GM10248 (cell line): ENCODE measurements at regions of chr7 and their contacts with region 1.

Region 1: DNA sequence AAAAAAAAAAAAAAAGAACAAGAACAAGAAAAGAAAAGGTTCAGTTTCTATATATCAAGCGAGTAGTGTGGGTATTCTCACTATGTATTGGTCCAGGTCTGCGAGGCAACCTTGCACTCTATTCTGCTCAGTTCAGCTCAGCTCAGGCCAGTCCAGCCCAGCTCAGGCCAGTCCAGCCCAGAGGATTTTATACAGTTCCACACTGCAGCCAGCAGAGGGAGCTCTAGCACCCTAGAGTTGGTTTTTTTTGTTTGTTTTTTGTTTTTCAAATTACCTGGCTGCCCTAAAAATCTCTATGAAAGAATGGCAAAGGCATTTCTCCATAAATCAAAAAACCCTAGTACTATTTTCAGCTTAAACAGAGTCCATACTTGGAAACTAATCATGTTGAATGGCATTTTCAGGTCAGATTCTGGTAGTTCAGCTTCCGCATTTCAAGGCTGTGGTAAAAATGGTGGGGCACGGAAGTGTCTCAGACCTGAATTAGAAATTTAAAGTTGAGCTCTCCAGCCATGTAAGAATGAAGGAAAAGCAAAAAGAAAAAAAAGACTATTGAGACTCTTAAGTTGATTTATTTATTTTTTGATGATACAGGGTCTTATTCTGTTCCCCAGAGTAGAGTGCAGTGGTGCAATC is 55.2 kb upstream of the GSDME start:
- DNase-seq: peak; percentile 58
- CTCF ChIP-seq: peak; percentile 81

Region 2: DNA sequence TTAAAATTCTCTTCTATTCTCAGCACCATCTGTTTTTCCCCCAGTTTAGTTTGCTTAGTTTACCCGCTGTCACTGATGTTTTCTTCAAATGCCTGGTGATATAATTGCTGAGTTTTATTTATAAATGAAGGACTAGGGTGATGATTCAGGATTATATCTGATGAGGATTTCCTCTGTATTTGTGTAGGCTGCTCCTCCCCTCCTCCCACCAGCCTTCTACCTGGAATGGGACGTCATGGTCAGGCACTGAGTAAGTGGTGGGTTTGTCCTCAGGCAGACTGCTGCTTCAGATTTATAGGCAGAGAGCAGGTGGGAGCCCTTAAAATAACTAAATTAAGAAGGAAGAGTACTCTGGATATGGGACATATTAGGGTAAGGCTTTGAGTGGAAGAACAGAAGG is 203.4 kb before region 1 on chr7:
- CTCF ChIA-PET with region 1: no interaction called
- POLR2A ChIA-PET with region 1: no interaction called
- DNase-seq: no peak
- CTCF ChIP-seq: no peak

Region 3: GRCh38 chr7:24764972-24765744 is 47.3 kb before region 1 on chr7:
- CTCF ChIA-PET with region 1: interaction called, 17 read pairs
- POLR2A ChIA-PET with region 1: no interaction called
- DNase-seq: no peak
- CTCF ChIP-seq: no peak

Region 4: GRCh38 chr7:24778543-24779282 is 33.7 kb before region 1 on chr7:
- CTCF ChIA-PET with region 1: interaction called, 17 read pairs
- POLR2A ChIA-PET with region 1: interaction called, 3 read pairs
- DNase-seq: peak; percentile 42
- CTCF ChIP-seq: no peak

Region 5: GRCh38 chr7:24825931-24826661 is 13.7 kb after region 1 on chr7:
- CTCF ChIA-PET with region 1: interaction called, 36 read pairs
- POLR2A ChIA-PET with region 1: no interaction called
- DNase-seq: no peak
- CTCF ChIP-seq: no peak

Region 6: DNA sequence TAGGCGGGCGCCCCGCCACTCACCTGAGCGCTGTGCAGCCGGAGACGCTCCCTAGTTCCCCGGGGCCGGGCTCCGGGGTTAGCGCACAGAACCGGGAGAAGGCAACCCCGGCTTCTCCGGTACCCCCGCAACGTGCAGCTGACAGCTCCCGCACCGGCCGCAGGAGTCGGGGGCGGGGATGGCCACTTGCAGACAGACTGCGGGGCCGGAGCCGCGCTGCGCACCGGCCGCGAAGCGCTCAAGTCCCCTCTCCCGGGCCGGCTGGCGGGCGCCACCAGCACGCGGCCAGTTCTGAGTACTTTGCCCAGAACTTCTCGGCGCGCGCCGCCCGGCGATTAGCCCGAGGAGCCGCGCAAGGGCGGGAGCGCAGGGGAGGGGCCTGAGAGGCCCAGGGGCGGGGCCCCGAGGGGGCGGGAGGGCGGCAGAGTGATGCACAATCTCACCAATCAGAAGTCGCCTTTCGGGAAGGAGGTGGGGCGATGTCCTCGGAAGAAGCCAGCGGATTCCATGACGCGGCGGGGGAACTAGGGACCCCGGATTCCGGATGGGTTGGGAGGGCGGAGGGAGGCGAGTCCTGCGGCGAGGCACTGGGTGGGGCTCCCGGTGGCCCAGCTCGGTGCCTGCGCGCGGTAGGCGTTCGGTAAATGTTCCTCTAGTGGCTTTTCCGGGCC is 167.6 kb after region 1 on chr7 and contains the start of gene OSBPL3:
- CTCF ChIA-PET with region 1: interaction called, 45 read pairs
- POLR2A ChIA-PET with region 1: no interaction called
- DNase-seq: peak; percentile 94
- CTCF ChIP-seq: peak; percentile 46

Region 7: GRCh38 chr7:25069900-25070443 is 257.5 kb after region 1 on chr7:
- CTCF ChIA-PET with region 1: interaction called, 72 read pairs
- POLR2A ChIA-PET with region 1: interaction called, 3 read pairs
- DNase-seq: peak; percentile 81
- CTCF ChIP-seq: peak; percentile 77

Region 8: GRCh38 chr7:25680636-25681035 is 868.2 kb after region 1 on chr7:
- CTCF ChIA-PET with region 1: no interaction called
- POLR2A ChIA-PET with region 1: no interaction called
- DNase-seq: no peak
- CTCF ChIP-seq: no peak